Heart left ventricle (tissue), 16 donors: ENCODE measurements at regions of chr11 and their contacts with region 1.

Region 1: DNA sequence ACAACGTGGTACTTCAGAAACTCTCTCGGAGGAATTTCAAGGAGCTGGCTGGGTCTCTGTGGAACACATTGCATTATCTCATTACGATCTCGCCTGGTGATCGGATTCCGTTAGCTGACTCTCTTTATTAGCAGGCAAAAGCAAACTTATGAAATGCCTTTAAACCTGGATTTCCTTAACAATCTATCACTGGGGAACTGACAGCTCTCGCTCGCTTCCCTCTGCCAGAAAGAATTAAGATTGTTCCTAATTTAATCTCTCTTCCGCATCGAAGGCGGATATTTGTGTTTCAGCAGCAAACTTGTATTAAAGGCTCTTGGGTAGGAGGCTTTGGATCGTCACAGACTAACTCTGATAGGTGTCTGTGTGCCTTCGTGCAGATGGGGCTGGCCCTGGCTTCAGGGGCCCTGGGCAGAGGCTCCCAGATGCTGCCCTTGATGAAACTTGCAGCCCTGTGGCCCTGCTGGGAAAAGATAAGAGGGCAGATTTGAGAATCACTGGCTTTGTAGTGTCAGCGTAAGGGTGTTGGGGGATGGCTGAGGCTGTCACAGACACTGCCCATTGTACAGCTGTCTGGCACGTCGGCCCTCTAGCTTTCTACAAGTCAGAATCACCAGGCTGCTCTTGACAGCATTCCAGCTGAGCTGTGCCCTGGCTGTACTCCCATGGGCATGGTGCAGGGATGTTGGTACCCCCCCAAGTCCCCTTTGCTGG is 162.2 kb upstream of the NECTIN1 start:
- DNase-seq: peak; percentile 76 to 92 (median 77)
- ATAC-seq: peak; percentile 86 to 97 (median 88)
- H3K4me3 ChIP-seq: no peak overlapping the region
- H3K27ac ChIP-seq: peak overlapping the region in 11 of 12 donors; percentile 52 to 93 (median 81)
- H3K4me1 ChIP-seq: peaks cover 0 to 39% (median 13%) of the 10 kb centered on the region in 12 donors
- H3K27me3 ChIP-seq: peaks cover 0 to 3% (median 0%) of the 10 kb centered on the region in 9 donors
- CTCF ChIP-seq: no peak
- POLR2A ChIP-seq: no peak

Region 2: DNA sequence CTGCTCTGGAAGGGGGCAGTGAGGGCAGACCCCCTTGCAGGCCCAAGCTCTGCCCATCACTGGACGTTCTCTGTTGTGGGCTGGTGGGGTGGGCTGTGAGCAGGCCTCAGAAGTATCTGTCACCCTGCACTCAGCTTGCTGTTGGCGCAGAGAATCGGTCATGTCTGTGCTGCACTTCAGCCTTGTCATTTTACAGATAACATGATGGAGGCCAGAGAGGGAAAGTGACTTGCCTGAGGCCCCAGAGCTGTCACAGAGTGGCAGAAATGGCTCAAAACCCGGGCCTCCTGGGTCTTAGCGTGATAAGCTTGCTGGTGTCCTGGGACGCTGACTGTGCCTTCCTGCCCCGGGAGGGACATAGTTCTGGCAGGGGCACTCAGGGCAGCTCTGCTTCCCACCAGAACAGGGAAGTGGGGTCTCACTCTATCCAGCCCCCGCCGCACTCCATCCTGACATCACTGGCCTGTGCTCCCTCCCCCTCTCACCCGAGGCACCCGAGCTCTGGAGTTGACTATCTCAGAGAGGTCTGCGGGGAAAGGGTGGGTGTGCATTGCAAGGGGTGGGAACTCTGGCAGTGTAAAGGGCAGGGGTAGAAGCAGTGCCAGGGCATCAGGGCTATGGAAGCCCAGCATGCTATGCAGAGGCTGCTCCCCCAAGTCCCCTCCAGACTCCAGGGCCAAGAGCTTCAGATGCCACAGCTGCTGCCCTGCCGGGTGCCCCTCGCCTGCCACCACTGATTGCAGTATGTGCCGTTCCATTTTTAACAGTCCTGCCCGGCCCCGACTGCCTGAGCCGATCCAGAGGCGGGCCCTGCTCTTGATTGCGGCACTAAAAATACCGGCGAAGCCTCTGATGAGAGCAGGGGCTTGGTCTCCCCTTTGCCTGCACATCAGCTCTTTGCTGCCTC is 111.8 kb before region 1 on chr11:
- intact Hi-C with region 1: loop called in 3 of 10 experiments (anchors 1 to 2 kb)
- DNase-seq: peak; percentile 70 to 84 (median 74)
- ATAC-seq: peak; percentile 83 to 91 (median 86)
- H3K4me3 ChIP-seq: no peak overlapping the region
- H3K27ac ChIP-seq: peak overlapping the region; percentile 24 to 95 (median 82)
- H3K4me1 ChIP-seq: peaks cover 0 to 49% (median 15%) of the 10 kb centered on the region in 12 donors
- H3K27me3 ChIP-seq: peaks cover 0 to 3% (median 0%) of the 10 kb centered on the region in 9 donors
- CTCF ChIP-seq: no peak
- POLR2A ChIP-seq: no peak